Activated CD4-positive, alpha-beta T cell treated with anti-CD3 and anti-CD28 coated beads for 36 hours (primary cell): ENCODE measurements at regions of chr3 and their contacts with region 1.

Region 1: DNA sequence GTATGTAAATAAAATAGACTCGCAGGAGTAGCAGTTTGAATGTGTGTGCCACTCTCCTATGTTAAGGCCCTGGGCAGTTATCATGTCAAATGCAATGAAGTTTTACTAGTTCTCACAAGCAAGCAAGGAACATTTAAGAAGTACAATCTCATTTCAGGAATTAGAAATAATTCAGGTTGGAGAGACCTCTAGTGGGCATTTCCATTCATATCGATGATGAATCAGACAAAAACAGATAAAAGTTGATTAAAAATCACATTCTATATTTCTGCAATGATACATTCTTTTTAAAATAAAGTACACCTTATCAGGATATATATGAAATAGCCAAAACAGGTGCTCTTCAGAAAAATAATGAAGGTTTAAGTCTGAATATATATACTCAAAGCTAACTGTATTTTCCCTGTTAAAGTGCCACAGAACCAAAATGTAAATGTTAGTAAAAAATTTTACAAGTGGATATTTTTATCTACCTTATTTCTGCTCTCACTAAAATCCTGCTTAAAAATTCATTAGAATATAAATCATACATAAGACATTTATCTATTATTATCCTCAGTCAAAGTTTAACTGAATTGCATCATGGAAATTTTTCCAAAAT is 492.4 kb upstream of the FRG2C start:
- DNase-seq: no peak
- ATAC-seq: no peak
- H3K4me3 Mint-ChIP-seq: no peak overlapping the region
- H3K27ac Mint-ChIP-seq: no peak overlapping the region
- H3K4me1 Mint-ChIP-seq: no peaks in the 10 kb centered on the region
- H3K27me3 Mint-ChIP-seq: peaks cover 3% of the 10 kb centered on the region

Region 2: GRCh38 chr3:73563896-73564582 is 1607.7 kb before region 1 on chr3:
- CTCF ChIA-PET with region 1: no interaction called
- POLR2A ChIA-PET with region 1: no interaction called
- intact Hi-C with region 1: no loop called
- DNase-seq: no peak
- ATAC-seq: no peak
- H3K4me3 Mint-ChIP-seq: no peak overlapping the region
- H3K27ac Mint-ChIP-seq: no peak overlapping the region
- H3K4me1 Mint-ChIP-seq: no peaks in the 10 kb centered on the region
- H3K27me3 Mint-ChIP-seq: peaks cover 2% of the 10 kb centered on the region

Region 3: GRCh38 chr3:74267588-74268184 is 904.0 kb before region 1 on chr3:
- CTCF ChIA-PET with region 1: no interaction called
- POLR2A ChIA-PET with region 1: no interaction called
- intact Hi-C with region 1: loop called in 1 of 2 experiments (anchors 2 kb)
- DNase-seq: peak; percentile 30
- ATAC-seq: no peak
- H3K4me3 Mint-ChIP-seq: no peak overlapping the region
- H3K27ac Mint-ChIP-seq: no peak overlapping the region
- H3K4me1 Mint-ChIP-seq: no peaks in the 10 kb centered on the region
- H3K27me3 Mint-ChIP-seq: no peaks in the 10 kb centered on the region

Region 4: GRCh38 chr3:75012791-75013331 is 158.9 kb before region 1 on chr3:
- CTCF ChIA-PET with region 1: no interaction called
- POLR2A ChIA-PET with region 1: no interaction called
- intact Hi-C with region 1: no loop called
- DNase-seq: no peak
- ATAC-seq: no peak
- H3K4me3 Mint-ChIP-seq: no peak overlapping the region
- H3K27ac Mint-ChIP-seq: no peak overlapping the region
- H3K4me1 Mint-ChIP-seq: no peaks in the 10 kb centered on the region
- H3K27me3 Mint-ChIP-seq: no peaks in the 10 kb centered on the region

Region 5: DNA sequence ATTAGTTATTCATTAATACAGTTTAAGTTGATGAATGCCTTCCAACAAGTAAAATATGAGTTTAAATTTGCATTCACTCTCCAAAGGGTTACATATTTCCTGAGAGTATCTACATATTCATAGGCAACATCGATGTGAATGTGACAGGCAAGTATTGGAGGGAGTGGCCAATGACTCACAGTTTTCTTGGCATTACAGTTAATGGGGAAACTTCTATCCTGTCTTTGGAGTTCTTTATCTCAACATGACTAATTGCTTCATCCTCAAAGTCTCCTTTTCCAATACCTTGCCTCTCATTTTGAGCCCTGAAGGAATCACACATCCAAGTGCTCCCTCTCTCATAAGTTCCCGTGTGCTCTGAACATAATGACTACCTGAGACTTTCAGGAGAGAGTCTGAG is 52.7 kb after region 1 on chr3:
- CTCF ChIA-PET with region 1: no interaction called
- POLR2A ChIA-PET with region 1: no interaction called
- intact Hi-C with region 1: no loop called
- DNase-seq: no peak
- ATAC-seq: no peak
- H3K4me3 Mint-ChIP-seq: no peak overlapping the region
- H3K27ac Mint-ChIP-seq: no peak overlapping the region
- H3K4me1 Mint-ChIP-seq: no peaks in the 10 kb centered on the region
- H3K27me3 Mint-ChIP-seq: peaks cover 6% of the 10 kb centered on the region